CD8-positive, alpha-beta T cell (primary cell): ENCODE measurements at regions of chr4 and their contacts with region 1.

Region 1: DNA sequence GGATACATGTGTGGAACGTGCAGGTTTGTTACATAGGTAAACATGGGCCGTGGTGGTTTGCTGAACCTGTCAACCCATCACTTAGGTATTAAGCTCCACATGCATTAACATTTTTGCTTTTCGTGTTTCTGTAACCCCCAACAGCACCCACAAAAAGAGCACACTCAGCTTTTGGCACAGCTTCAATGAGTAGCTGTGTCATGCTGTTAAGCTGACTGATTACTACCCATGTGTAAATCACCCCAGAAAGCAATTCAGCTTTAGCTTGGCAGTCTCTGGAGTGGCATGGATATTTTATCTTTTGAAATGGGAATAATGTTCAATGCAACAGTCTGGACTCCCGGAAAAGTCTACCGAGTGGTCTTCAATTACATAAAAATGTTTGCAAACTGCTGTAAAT is 734.3 kb downstream of the STIM2 start:
- DNase-seq: no peak
- ATAC-seq: no peak
- H3K4me3 ChIP-seq: no peak overlapping the region
- H3K4me3 Mint-ChIP-seq: no peak overlapping the region
- H3K27ac ChIP-seq: no peak overlapping the region
- H3K27ac Mint-ChIP-seq: no peak overlapping the region
- H3K4me1 ChIP-seq: no peaks in the 10 kb centered on the region
- H3K4me1 Mint-ChIP-seq: no peaks in the 10 kb centered on the region
- H3K27me3 ChIP-seq: no peaks in the 10 kb centered on the region
- H3K27me3 Mint-ChIP-seq: no peaks in the 10 kb centered on the region
- CTCF ChIP-seq: no peak

Region 2: GRCh38 chr4:27628609-27629008 is 33.7 kb after region 1 on chr4:
- CTCF ChIA-PET with region 1: no interaction called
- POLR2A ChIA-PET with region 1: no interaction called
- intact Hi-C with region 1: loop called in 1 of 2 experiments (anchors 1 kb)
- DNase-seq: no peak
- ATAC-seq: no peak
- H3K4me3 ChIP-seq: no peak overlapping the region
- H3K4me3 Mint-ChIP-seq: no peak overlapping the region
- H3K27ac ChIP-seq: no peak overlapping the region
- H3K27ac Mint-ChIP-seq: no peak overlapping the region
- H3K4me1 ChIP-seq: no peaks in the 10 kb centered on the region
- H3K4me1 Mint-ChIP-seq: no peaks in the 10 kb centered on the region
- H3K27me3 ChIP-seq: no peaks in the 10 kb centered on the region
- H3K27me3 Mint-ChIP-seq: no peaks in the 10 kb centered on the region
- CTCF ChIP-seq: no peak